ENCODE measurements at regions of chr5 and their contacts with region 1.

Region 1: DNA sequence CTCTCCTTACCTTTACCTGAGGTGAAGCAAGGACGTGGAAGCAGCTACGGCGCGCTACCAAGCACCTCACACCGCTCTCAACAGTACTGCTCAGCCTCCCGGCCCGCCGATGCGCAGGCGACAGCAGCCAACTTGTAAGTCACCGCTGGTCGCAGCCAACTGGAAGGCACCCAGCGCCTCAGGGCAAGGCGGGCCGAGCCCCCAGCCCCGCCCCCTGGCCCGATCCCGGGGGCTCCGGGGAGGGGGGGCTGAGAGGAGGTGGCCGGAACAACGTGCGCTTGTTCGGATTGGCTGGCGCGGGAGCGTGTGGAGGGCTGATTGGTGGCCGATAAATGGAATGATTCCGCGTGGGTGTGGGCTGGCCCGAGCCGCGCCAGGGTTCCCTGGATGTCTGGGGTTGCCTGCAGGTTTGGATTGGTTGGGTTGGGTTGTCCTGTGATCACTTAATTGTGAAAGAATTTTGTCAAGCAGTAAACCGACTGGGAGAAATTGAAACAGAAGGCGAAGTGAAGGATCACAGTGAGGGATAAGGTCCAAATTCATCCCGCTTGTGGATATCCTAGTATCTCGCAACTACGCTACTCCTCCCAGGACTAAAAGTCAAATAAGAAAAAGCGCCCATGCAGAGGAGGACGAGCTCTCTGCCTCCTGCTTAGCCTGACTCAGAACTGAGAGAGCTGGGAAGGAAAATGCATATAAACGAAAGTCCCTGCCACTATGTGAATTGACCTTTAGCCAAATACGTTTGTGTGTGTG is at the start of gene STARD4:
- DNase-seq: peak; percentile 96
- ATAC-seq: peak; percentile 96
- H3K4me3 ChIP-seq: peak within 1 kb of the TSS; percentile 90 to 96 (median 93)
- H3K4me3 Mint-ChIP-seq: peak within 1 kb of the TSS; percentile 99
- H3K27ac ChIP-seq: peak within 1 kb of the TSS; percentile 81 to 82
- H3K27ac Mint-ChIP-seq: peak within 1 kb of the TSS; percentile 98
- H3K4me1 ChIP-seq: peaks cover 10 to 12% of the 10 kb centered on the region in 2 donors
- H3K4me1 Mint-ChIP-seq: peaks cover 36% of the 10 kb centered on the region
- H3K27me3 ChIP-seq: no peaks in the 10 kb centered on the region
- H3K27me3 Mint-ChIP-seq: no peaks in the 10 kb centered on the region
- CTCF ChIP-seq: no peak
- total RNA-seq, gene STARD4: 28.5 and 31.1 TPM in 2 replicates

Region 2: DNA sequence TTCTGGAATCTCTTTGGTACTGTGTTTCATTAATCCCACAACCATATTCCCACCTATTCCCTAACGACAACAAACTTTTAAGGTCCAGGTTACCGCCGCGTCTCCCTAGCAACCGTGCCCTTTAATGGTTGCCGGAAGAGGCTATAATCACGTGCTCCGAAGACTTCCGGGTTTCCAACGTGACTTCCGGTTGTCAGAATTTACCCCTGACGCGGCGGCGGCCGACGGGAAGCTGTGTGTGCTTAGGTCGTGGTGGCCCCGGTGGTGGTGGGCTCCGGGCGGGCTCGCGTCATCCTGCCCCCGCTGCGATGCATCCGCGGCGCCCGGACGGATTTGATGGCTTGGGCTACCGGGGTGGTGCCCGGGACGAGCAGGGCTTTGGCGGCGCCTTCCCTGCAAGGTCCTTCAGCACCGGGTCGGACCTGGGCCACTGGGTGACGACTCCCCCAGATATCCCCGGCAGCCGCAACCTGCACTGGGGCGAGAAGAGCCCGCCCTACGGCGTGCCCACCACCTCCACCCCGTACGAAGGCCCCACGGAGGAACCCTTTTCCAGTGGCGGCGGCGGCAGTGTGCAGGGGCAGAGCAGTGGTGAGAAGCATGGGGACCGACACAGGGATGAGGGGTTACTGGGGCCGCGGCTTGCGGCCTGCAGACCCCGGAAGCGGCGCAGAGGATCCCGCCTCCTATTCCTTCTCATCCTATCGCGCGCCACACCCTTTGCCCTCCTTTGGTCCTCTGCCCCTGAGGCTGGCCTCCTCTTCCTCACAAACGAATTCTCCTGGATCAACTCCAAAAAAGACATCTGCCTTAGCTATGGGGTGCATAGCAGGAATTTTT is 773.5 kb before region 1 on chr5 and contains the start of gene SLC25A46:
- CTCF ChIA-PET with region 1: no interaction called
- POLR2A ChIA-PET with region 1: no interaction called
- intact Hi-C with region 1: loop called (anchors 2 kb)
- DNase-seq: peak; percentile 96
- ATAC-seq: peak; percentile 82
- H3K4me3 ChIP-seq: peak within 1 kb of the TSS; percentile 72 to 98 (median 92)
- H3K4me3 Mint-ChIP-seq: peak within 1 kb of the TSS; percentile 100
- H3K27ac ChIP-seq: peak within 1 kb of the TSS; percentile 83 to 97
- H3K27ac Mint-ChIP-seq: peak within 1 kb of the TSS; percentile 99
- H3K4me1 ChIP-seq: peaks cover 14 to 17% of the 10 kb centered on the region in 2 donors
- H3K4me1 Mint-ChIP-seq: peaks cover 29% of the 10 kb centered on the region
- H3K27me3 ChIP-seq: peaks cover 0 to 4% (median 0%) of the 10 kb centered on the region in 4 experiments
- H3K27me3 Mint-ChIP-seq: peaks cover 10% of the 10 kb centered on the region
- CTCF ChIP-seq: no peak
- total RNA-seq, gene SLC25A46: 36.9 and 38.0 TPM in 2 replicates

Region 3: GRCh38 chr5:111530298-111530740 is 17.8 kb after region 1 on chr5:
- CTCF ChIA-PET with region 1: interaction called, 33 read pairs
- POLR2A ChIA-PET with region 1: interaction called, 6 read pairs
- intact Hi-C with region 1: loop called (anchors 1 kb)
- DNase-seq: peak; percentile 89
- ATAC-seq: peak; percentile 100
- H3K4me3 ChIP-seq: peak overlapping the region in 1 of 5 experiments; percentile 8
- H3K4me3 Mint-ChIP-seq: peak overlapping the region; percentile 53
- H3K27ac ChIP-seq: peak overlapping the region; percentile 32 to 83
- H3K27ac Mint-ChIP-seq: peak overlapping the region; percentile 69
- H3K4me1 ChIP-seq: peaks cover 13 to 17% of the 10 kb centered on the region in 2 donors
- H3K4me1 Mint-ChIP-seq: peaks cover 20% of the 10 kb centered on the region
- H3K27me3 ChIP-seq: no peaks in the 10 kb centered on the region
- H3K27me3 Mint-ChIP-seq: peaks cover 3% of the 10 kb centered on the region
- CTCF ChIP-seq: no peak

Region 4: GRCh38 chr5:112160652-112161391 is 648.3 kb after region 1 on chr5:
- CTCF ChIA-PET with region 1: no interaction called
- POLR2A ChIA-PET with region 1: interaction called, 4 read pairs
- intact Hi-C with region 1: loop called (anchors 1 kb)
- DNase-seq: peak; percentile 95
- ATAC-seq: peak; percentile 99
- H3K4me3 ChIP-seq: peak overlapping the region; percentile 71 to 97 (median 90)
- H3K4me3 Mint-ChIP-seq: peak overlapping the region; percentile 96
- H3K27ac ChIP-seq: peak overlapping the region; percentile 52 to 83
- H3K27ac Mint-ChIP-seq: peak overlapping the region; percentile 90
- H3K4me1 ChIP-seq: peaks cover 14 to 20% of the 10 kb centered on the region in 2 donors
- H3K4me1 Mint-ChIP-seq: peaks cover 24% of the 10 kb centered on the region
- H3K27me3 ChIP-seq: no peaks in the 10 kb centered on the region
- H3K27me3 Mint-ChIP-seq: peaks cover 4% of the 10 kb centered on the region
- CTCF ChIP-seq: peak; percentile 88

Region 5: GRCh38 chr5:112976432-112977309 is 1464.1 kb after region 1 on chr5 and contains the start of gene DCP2:
- CTCF ChIA-PET with region 1: no interaction called
- POLR2A ChIA-PET with region 1: no interaction called
- intact Hi-C with region 1: loop called (anchors 5 kb)
- DNase-seq: peak; percentile 98
- ATAC-seq: peak; percentile 97
- H3K4me3 ChIP-seq: peak within 1 kb of the TSS; percentile 77 to 99 (median 96)
- H3K4me3 Mint-ChIP-seq: peak within 1 kb of the TSS; percentile 97
- H3K27ac ChIP-seq: peak within 1 kb of the TSS; percentile 74 to 84
- H3K27ac Mint-ChIP-seq: peak within 1 kb of the TSS; percentile 88
- H3K4me1 ChIP-seq: peaks cover 14 to 28% of the 10 kb centered on the region in 2 donors
- H3K4me1 Mint-ChIP-seq: peaks cover 43% of the 10 kb centered on the region
- H3K27me3 ChIP-seq: no peaks in the 10 kb centered on the region
- H3K27me3 Mint-ChIP-seq: no peaks in the 10 kb centered on the region
- CTCF ChIP-seq: no peak
- total RNA-seq, gene DCP2: 64.5 and 73.1 TPM in 2 replicates

Region 6: GRCh38 chr5:113166852-113167366 is 1654.4 kb after region 1 on chr5:
- CTCF ChIA-PET with region 1: no interaction called
- POLR2A ChIA-PET with region 1: no interaction called
- intact Hi-C with region 1: no loop called
- DNase-seq: no peak
- ATAC-seq: no peak
- H3K4me3 ChIP-seq: no peak overlapping the region
- H3K4me3 Mint-ChIP-seq: no peak overlapping the region
- H3K27ac ChIP-seq: no peak overlapping the region
- H3K27ac Mint-ChIP-seq: no peak overlapping the region
- H3K4me1 ChIP-seq: no peaks in the 10 kb centered on the region
- H3K4me1 Mint-ChIP-seq: no peaks in the 10 kb centered on the region
- H3K27me3 ChIP-seq: peaks cover 0 to 3% (median 0%) of the 10 kb centered on the region in 4 experiments
- H3K27me3 Mint-ChIP-seq: peaks cover 21% of the 10 kb centered on the region
- CTCF ChIP-seq: no peak

Measured in B cell (primary cell).